ENCODE measurements at regions of chr5 and their contacts with region 1.

Region 1: DNA sequence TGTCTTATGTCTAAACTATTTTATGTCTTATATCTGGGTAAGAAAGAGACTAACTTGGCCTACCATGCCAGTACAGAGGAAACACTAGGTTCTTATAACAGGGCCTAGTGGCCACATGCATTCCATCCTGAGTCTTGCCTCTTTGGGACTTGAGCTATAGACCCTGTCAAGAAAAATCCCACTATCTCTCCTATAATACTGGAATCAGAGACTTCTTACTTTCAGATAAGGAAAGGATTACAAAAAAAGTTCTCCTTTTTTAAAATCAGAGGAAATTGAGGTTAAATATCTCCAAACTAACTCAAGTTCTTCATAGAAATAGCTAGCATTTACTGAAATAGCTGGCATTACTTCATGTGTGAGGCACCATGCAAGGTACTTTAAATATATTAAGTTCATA is 34.3 kb downstream of the PTGER4 start:
- DNase-seq: no peak
- ATAC-seq: no peak
- H3K4me3 ChIP-seq: no peak overlapping the region
- H3K27ac ChIP-seq: no peak overlapping the region
- H3K4me1 ChIP-seq: no peaks in the 10 kb centered on the region
- H3K27me3 ChIP-seq: no peaks in the 10 kb centered on the region
- CTCF ChIP-seq: no peak
- EP300 ChIP-seq: no peak
- POLR2A ChIP-seq: no peak
- RAD21 ChIP-seq: no peak

Region 2: DNA sequence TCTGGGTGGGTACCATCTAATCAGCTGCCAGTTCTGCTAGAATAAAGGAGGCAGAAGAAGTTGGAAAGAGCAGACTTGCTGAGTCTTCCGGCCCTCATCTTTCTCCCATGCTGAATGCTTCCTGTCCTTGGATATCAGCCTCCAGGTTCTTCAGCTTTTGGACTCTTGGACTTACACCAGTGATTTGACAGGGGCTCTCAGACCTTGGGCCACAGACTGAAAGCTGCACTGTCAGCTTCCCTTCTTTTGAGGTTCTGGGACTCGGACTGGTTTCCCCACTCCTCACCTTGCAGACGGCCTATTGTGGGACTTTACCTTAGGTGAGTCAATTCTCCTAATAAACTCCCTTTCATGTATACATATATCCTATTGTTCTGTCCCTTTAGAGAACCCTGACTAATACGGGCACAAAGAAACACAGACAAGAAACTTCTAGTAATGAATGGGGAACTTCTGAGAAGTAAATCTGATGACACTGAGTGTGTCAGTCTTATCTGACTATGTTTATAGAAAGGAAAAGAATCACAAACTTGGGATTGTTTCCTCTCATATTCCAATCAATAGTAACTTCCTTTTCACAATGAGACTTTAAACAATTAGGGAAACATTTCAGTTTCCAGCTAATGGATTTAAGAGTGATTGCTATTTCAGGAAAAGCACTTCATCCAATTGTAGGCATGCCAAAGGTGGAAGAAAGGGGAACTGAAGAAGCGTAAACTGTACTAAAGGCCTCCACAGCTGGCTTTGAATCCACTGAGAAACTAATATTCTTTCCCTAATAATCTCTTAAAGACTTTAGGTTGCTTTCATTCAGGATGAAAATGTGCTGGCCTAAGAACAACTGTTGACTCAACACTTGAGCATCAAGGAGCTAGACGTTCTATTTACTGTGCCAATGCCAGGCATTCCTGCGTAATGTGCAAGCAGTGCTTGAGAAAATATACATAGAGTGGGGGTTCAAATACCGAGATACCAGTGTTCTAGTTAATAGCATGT is 162.2 kb before region 1 on chr5:
- CTCF ChIA-PET with region 1: no interaction called
- POLR2A ChIA-PET with region 1: no interaction called
- RAD21 ChIA-PET with region 1: no interaction called
- SMC1A ChIA-PET with region 1: no interaction called
- in situ Hi-C with region 1: no loop called
- intact Hi-C with region 1: no loop called
- DNase-seq: no peak
- ATAC-seq: no peak
- H3K4me3 ChIP-seq: no peak overlapping the region
- H3K27ac ChIP-seq: no peak overlapping the region
- H3K4me1 ChIP-seq: no peaks in the 10 kb centered on the region
- H3K27me3 ChIP-seq: no peaks in the 10 kb centered on the region
- CTCF ChIP-seq: no peak
- EP300 ChIP-seq: no peak
- POLR2A ChIP-seq: no peak
- RAD21 ChIP-seq: no peak

Region 3: GRCh38 chr5:40700116-40700782 is 13.8 kb before region 1 on chr5:
- CTCF ChIA-PET with region 1: interaction called, 14 read pairs
- POLR2A ChIA-PET with region 1: no interaction called
- RAD21 ChIA-PET with region 1: interaction called, 3 read pairs
- SMC1A ChIA-PET with region 1: interaction called, 3 read pairs
- in situ Hi-C with region 1: no loop called
- intact Hi-C with region 1: no loop called
- DNase-seq: no peak
- ATAC-seq: no peak
- H3K4me3 ChIP-seq: no peak overlapping the region
- H3K27ac ChIP-seq: no peak overlapping the region
- H3K4me1 ChIP-seq: no peaks in the 10 kb centered on the region
- H3K27me3 ChIP-seq: no peaks in the 10 kb centered on the region
- CTCF ChIP-seq: no peak
- EP300 ChIP-seq: no peak
- POLR2A ChIP-seq: no peak
- RAD21 ChIP-seq: no peak